Endothelial cell of umbilical vein (primary cell): ENCODE measurements at regions of chr2 and their contacts with region 1.

Region 1: DNA sequence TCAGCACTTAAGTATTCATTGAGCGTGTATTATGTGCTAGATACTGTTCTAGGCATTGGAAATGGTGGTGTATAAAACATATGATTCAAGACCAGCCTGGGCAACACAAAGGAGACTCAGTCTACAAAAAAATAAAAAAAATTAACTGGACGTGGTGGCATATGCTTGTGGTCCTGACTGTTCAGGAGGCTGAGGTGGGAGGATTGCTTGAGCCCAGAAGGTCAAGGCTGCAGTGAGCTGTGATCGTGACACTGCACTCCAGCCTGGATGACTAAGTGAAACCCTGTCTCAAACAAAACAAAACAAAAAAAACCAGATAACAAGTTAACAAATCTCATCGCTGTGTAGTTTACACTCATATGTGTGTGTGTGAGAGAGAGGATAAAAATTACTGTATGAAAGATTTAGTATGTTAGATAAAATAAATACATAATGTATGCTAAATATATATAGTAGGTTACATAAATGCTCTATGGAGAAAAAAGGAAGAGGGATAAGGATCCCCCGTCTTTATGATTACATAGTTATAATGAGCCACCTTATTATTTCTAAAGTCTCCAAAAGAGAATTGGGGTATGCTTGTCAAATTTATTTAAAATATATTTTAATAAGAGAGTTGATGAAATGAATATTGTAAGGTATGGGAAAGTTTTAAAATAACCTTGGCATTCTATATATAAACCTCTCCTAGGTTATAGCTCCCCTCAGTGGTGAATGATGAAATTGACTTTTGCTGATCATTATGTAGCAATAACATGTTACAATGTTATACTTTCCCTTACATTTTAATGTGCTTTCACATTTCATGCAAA is 69.2 kb downstream of the EHBP1 start:
- DNase-seq: peak; percentile 62
- H3K4me3 ChIP-seq: no peak overlapping the region
- H3K27ac ChIP-seq: no peak overlapping the region
- H3K4me1 ChIP-seq: no peaks in the 10 kb centered on the region
- H3K27me3 ChIP-seq: no peaks in the 10 kb centered on the region
- CTCF ChIP-seq: peak; percentile 38 to 41
- POLR2A ChIP-seq: no peak

Region 2: DNA sequence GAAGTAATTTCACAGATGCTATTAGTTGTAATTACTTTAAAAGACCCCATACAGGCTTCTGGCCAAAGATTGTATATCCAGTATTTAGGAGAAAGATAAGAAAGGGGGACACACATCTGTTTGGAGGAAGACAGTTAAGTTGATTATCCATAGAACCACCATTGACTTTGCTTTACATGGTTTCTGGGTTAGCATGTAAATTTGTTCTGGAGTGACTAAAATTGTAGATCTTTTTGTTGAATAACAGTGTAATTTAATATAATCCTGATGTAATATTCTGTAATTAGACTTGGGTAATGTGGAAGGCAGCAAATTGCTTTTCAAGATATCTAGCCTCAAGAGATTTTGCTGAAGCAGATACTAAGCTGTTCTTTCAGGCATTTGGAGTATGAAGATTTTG is 852.0 kb before region 1 on chr2:
- CTCF ChIA-PET with region 1: interaction called, 4 read pairs
- POLR2A ChIA-PET with region 1: no interaction called
- dilution Hi-C with region 1: no loop called
- intact Hi-C with region 1: loop called (anchors 1 kb)
- DNase-seq: no peak
- H3K4me3 ChIP-seq: no peak overlapping the region
- H3K27ac ChIP-seq: no peak overlapping the region
- H3K4me1 ChIP-seq: no peaks in the 10 kb centered on the region
- H3K27me3 ChIP-seq: no peaks in the 10 kb centered on the region
- CTCF ChIP-seq: no peak
- POLR2A ChIP-seq: no peak

Region 3: GRCh38 chr2:62423232-62423631 is 351.5 kb before region 1 on chr2:
- CTCF ChIA-PET with region 1: interaction called, 4 read pairs
- POLR2A ChIA-PET with region 1: no interaction called
- dilution Hi-C with region 1: no loop called
- intact Hi-C with region 1: loop called (anchors 1 kb)
- DNase-seq: no peak
- H3K4me3 ChIP-seq: no peak overlapping the region
- H3K27ac ChIP-seq: no peak overlapping the region
- H3K4me1 ChIP-seq: no peaks in the 10 kb centered on the region
- H3K27me3 ChIP-seq: peaks cover 0 to 4% of the 10 kb centered on the region in 2 experiments
- CTCF ChIP-seq: peak in 1 of 2 donors; percentile 21
- POLR2A ChIP-seq: no peak